ENCODE measurements at regions of chr14 and their contacts with region 1.

Region 1: GRCh38 chr14:54347997-54348611 is 48.7 kb upstream of the CDKN3 start:
- DNase-seq: peak; percentile 55
- H3K4me3 ChIP-seq: no peak overlapping the region; a peak in 1 of 4 replicates
- H3K27ac ChIP-seq: no peak overlapping the region
- H3K4me1 ChIP-seq: peaks cover 7 to 20% of the 10 kb centered on the region in 2 experiments; a peak in 3 of 4 replicates
- H3K27me3 ChIP-seq: no peaks in the 10 kb centered on the region; the same call in 1 of the 2 replicates
- CTCF ChIP-seq: peak; percentile 85
- EP300 ChIP-seq: no peak
- RAD21 ChIP-seq: peak; percentile 97

Region 2: DNA sequence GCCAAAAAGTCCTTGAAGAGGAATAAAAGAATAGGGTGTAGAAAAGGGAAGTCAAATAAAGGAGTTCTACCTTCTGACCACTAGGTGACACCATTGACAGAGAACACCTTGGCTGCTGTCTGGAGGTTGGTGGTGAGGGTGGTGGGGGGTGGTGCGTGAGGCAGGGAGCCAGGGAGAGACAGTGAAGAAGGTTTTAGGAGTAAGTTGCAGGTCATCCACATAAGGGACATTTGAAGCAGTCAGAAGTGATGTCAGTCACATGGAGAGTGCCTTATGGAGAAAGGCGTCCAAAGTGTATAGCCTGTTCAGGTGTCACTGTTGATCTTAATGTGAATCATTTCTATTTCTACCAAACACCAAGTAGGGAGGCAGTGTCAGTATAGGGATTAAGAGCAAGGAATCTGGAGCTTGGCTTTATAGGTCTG is 915.7 kb before region 1 on chr14:
- CTCF ChIA-PET with region 1: interaction called, 32 read pairs
- POLR2A ChIA-PET with region 1: no interaction called
- DNase-seq: peak; percentile 47
- H3K4me3 ChIP-seq: no peak overlapping the region
- H3K27ac ChIP-seq: no peak overlapping the region
- H3K4me1 ChIP-seq: no peaks in the 10 kb centered on the region
- H3K27me3 ChIP-seq: no peaks in the 10 kb centered on the region; the same call in 1 of the 2 replicates
- CTCF ChIP-seq: peak; percentile 64
- EP300 ChIP-seq: no peak
- RAD21 ChIP-seq: peak; percentile 64

Region 3: GRCh38 chr14:53539489-53540126 is 808.5 kb before region 1 on chr14:
- CTCF ChIA-PET with region 1: interaction called, 70 read pairs
- POLR2A ChIA-PET with region 1: no interaction called
- DNase-seq: peak; percentile 39
- H3K4me3 ChIP-seq: no peak overlapping the region; a peak in 1 of 4 replicates
- H3K27ac ChIP-seq: no peak overlapping the region
- H3K4me1 ChIP-seq: peaks cover 0 to 7% of the 10 kb centered on the region in 2 experiments; a peak in 1 of 4 replicates
- H3K27me3 ChIP-seq: no peaks in the 10 kb centered on the region; the same call in 1 of the 2 replicates
- CTCF ChIP-seq: peak; percentile 86
- EP300 ChIP-seq: no peak
- RAD21 ChIP-seq: peak; percentile 91

Region 4: DNA sequence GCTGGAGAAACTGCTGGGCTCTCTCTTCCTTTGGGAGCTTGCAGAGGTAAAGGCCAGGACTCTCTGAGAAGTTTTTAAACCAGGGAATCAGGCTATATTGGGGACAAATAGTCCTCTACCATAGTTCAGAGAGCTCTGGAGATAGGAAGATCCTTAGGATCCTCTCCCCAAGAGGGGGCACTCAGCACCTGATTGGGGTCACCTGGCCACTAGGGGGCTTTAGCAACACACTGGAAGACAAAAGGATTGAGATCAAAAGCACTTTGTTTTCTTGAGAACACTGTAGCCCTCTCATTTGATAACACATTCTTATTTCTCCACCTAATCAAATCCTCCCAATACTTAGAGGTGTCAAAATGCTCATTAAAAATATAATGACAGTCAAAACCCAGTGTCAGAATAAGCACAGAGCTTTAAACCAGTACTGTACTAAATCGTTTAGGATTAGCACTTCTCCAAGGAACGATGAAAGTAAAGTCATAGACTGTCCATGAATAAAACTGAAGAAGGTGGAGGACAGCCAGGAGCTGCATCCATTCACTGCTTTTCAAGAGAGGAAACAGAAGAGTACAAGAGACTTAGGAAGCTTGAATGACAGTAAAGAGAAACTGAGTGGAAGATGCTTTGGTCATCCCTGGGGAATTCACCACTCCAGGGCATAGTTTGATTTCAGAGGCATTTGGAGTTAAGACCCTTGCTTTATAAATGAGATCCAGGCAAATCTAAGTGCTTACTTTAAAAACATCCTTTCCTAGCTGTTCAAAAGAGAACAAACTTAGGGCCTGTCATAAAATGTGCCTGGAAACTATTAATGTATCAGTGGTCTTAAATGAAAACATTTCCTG is 418.0 kb before region 1 on chr14:
- CTCF ChIA-PET with region 1: interaction called, 20 read pairs
- POLR2A ChIA-PET with region 1: no interaction called
- DNase-seq: no peak
- H3K4me3 ChIP-seq: no peak overlapping the region
- H3K27ac ChIP-seq: no peak overlapping the region
- H3K4me1 ChIP-seq: no peaks in the 10 kb centered on the region
- H3K27me3 ChIP-seq: peaks cover 3% of the 10 kb centered on the region
- CTCF ChIP-seq: peak; percentile 39
- EP300 ChIP-seq: no peak
- RAD21 ChIP-seq: peak; percentile 53

Region 5: GRCh38 chr14:54175298-54175942 is 172.7 kb before region 1 on chr14:
- CTCF ChIA-PET with region 1: interaction called, 20 read pairs
- POLR2A ChIA-PET with region 1: interaction called, 3 read pairs
- DNase-seq: peak; percentile 54
- H3K4me3 ChIP-seq: no peak overlapping the region
- H3K27ac ChIP-seq: no peak overlapping the region
- H3K4me1 ChIP-seq: peaks cover 3 to 7% of the 10 kb centered on the region in 2 experiments; a peak in 2 of 4 replicates
- H3K27me3 ChIP-seq: no peaks in the 10 kb centered on the region
- CTCF ChIP-seq: peak; percentile 91
- EP300 ChIP-seq: no peak
- RAD21 ChIP-seq: peak; percentile 77

Measured in SK-N-SH (cell line).